Breast epithelium (tissue), 4 donors: ENCODE measurements at regions of chr4 and their contacts with region 1.

Region 1: DNA sequence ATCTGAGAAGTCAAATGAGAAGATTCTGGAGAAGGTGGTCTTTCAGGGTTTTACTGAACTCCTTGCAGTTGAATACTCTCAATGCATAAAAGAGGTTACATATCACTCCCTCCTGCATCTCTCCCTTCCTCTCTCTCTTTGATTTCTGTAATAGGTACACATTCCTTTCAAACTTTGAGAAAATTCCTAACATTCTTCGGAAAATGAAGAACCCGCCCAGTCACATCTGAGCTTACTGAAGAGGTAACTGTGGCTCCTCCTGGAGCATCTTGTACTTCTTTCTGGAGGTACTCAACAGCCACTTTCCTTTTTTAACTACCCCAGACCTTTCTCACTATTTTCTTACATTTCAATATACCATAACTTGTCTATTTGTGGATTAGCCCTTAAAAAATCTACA is 24.7 kb downstream of the NDST3 start:
- DNase-seq: no peak
- H3K4me3 ChIP-seq: no peak overlapping the region
- H3K27ac ChIP-seq: no peak overlapping the region
- H3K4me1 ChIP-seq: no peaks in the 10 kb centered on the region
- H3K27me3 ChIP-seq: no peaks in the 10 kb centered on the region
- CTCF ChIP-seq: no peak
- POLR2A ChIP-seq: no peak

Region 2: DNA sequence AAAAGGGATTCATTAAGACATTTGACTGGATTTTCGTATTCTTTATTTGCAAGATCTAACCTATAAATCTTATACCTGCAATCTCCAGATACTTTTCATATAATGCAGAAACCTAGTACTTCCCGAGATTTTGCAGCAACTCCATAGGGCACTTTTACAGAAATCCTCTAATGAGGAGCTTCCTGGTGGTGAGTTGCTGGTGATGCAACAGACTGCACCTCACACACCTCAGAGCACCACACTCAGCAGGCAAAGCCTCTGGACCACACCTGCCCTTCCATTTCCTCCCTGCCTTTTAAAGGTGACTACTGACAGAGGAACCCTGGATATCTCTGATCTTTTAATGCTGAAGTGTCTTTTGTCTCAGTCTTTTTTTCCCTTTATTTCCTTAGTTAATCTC is 1262.9 kb before region 1 on chr4:
- intact Hi-C with region 1: loop called (anchors 5 kb)
- DNase-seq: no peak
- H3K4me3 ChIP-seq: no peak overlapping the region
- H3K27ac ChIP-seq: no peak overlapping the region
- H3K4me1 ChIP-seq: no peaks in the 10 kb centered on the region
- H3K27me3 ChIP-seq: no peaks in the 10 kb centered on the region
- CTCF ChIP-seq: no peak
- POLR2A ChIP-seq: no peak

Region 3: GRCh38 chr4:118086344-118086743 is 27.4 kb after region 1 on chr4:
- intact Hi-C with region 1: no loop called
- DNase-seq: no peak
- H3K4me3 ChIP-seq: no peak overlapping the region
- H3K27ac ChIP-seq: no peak overlapping the region
- H3K4me1 ChIP-seq: no peaks in the 10 kb centered on the region
- H3K27me3 ChIP-seq: no peaks in the 10 kb centered on the region
- CTCF ChIP-seq: no peak
- POLR2A ChIP-seq: no peak